AG04450 (cell line): ENCODE measurements at regions of chr9 and their contacts with region 1.

Region 1: GRCh38 chr9:34603610-34604231 is 8.2 kb downstream of the RPP25L start:
- DNase-seq: peak; percentile 29
- H3K4me3 ChIP-seq: no peak overlapping the region
- H3K27ac ChIP-seq: no peak overlapping the region
- H3K27me3 ChIP-seq: peaks cover 31% of the 10 kb centered on the region
- CTCF ChIP-seq: peak; percentile 95

Region 2: DNA sequence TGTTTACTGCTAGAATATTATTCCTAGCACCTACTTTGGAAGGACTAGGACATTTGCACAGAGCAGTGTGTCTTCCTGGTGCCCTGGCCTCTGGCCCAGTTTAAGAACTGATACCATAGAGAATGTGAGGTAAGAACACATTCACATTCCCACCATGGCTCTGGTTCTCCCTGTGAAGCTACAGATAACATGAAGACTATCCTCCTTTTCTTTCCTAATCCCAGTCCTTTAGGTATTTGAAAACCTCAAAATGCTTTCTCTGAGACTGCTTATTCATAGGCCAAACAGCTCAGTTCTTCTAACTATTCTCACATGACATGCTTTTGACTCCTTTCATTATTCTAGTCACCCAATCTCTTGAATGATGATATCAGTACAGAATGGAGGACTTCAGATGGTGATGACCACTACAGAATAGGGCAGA is 157.2 kb before region 1 on chr9:
- CTCF ChIA-PET with region 1: interaction called, 11 read pairs
- POLR2A ChIA-PET with region 1: no interaction called
- DNase-seq: no peak
- H3K4me3 ChIP-seq: no peak overlapping the region
- H3K27ac ChIP-seq: no peak overlapping the region
- H3K27me3 ChIP-seq: no peaks in the 10 kb centered on the region
- CTCF ChIP-seq: no peak

Region 3: DNA sequence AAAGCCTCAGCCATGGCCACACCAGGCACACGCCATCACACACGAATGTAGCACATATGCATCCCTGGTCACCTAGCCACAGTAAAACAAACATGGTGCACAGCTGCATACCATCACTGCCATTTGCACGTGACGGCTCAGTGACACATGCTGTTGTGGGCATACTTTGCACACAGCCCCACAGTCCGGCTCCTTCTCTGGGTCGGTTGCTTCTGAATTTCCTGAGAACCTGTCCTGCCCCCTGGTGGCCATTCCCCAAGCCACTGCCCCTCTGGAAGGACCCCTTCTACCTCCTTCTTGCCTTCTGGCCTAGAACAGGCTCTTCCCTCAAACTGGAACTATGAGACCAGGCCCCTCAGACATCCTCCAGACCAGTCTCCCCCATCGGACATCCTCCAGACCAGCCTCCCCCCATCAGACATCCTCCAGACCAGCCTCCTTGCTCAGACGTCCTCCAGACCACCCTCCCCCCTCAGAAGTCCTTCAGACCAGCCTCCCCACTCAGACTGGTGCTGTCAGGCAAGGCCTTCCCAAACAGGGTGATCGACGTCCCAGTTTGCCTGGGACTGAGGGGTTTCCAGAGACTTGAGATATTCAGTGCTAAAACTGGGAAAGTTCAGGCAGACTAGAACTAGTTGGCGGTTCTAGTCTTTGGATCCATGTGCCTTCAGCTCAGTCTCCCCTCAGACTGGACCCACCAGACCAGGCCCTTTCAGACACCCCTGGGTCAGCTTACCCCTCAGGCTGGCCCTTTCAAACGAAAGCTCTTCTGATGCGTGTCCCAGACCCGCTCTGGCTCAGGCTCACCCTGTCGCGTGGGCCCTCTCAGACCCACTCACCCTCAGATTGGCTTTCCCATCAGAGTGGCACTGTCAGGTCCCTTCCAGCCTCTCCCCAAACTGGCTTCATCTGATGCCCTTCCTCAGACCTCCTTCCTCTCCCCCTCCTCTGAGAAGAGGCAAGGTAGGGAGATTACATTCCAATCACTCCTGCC is 56.6 kb before region 1 on chr9:
- CTCF ChIA-PET with region 1: interaction called, 31 read pairs
- POLR2A ChIA-PET with region 1: no interaction called
- DNase-seq: peak; percentile 10
- H3K4me3 ChIP-seq: no peak overlapping the region
- H3K27ac ChIP-seq: no peak overlapping the region
- H3K27me3 ChIP-seq: peaks cover 10% of the 10 kb centered on the region
- CTCF ChIP-seq: peak; percentile 63

Region 4: GRCh38 chr9:34591248-34591916 is 12.3 kb before region 1 on chr9:
- CTCF ChIA-PET with region 1: interaction called, 39 read pairs
- POLR2A ChIA-PET with region 1: no interaction called
- DNase-seq: peak; percentile 32
- H3K4me3 ChIP-seq: no peak overlapping the region
- H3K27ac ChIP-seq: no peak overlapping the region
- H3K27me3 ChIP-seq: peaks cover 74% of the 10 kb centered on the region
- CTCF ChIP-seq: peak; percentile 85

Region 5: GRCh38 chr9:34637356-34638137 is 33.8 kb after region 1 on chr9 and contains the start of gene SIGMAR1:
- CTCF ChIA-PET with region 1: interaction called, 36 read pairs
- POLR2A ChIA-PET with region 1: no interaction called
- DNase-seq: peak; percentile 82
- H3K4me3 ChIP-seq: peak within 1 kb of the TSS; percentile 80
- H3K27ac ChIP-seq: peak within 1 kb of the TSS; percentile 11
- H3K27me3 ChIP-seq: no peaks in the 10 kb centered on the region
- CTCF ChIP-seq: no peak
- polyA plus RNA-seq, gene SIGMAR1: 38.9 and 56.9 TPM in 2 replicates

Region 6: DNA sequence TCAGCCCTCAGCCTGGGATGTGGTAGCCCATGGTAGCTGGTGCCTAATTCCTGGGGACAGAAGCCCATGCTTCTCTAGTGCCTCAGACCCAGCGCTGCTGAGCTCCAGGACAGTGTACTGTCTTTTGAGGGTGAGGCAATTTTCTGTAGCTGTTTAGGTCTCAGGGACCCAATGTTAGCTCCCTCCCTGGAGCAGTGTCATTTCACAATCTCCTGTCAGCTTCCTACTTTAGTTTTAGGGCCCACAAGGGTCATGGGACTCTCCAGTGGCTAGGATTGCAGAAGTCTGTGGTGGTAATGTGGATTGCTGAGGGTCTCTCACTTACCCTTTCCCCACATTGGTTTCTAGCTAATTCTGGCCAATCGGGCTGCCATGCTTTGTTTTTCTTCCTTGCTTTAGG is 173.9 kb after region 1 on chr9:
- CTCF ChIA-PET with region 1: no interaction called
- POLR2A ChIA-PET with region 1: no interaction called
- DNase-seq: no peak
- H3K4me3 ChIP-seq: no peak overlapping the region
- H3K27ac ChIP-seq: no peak overlapping the region
- H3K27me3 ChIP-seq: peaks cover 3% of the 10 kb centered on the region
- CTCF ChIP-seq: no peak

Region 7: GRCh38 chr9:34899535-34900158 is 295.9 kb after region 1 on chr9:
- CTCF ChIA-PET with region 1: no interaction called
- POLR2A ChIA-PET with region 1: no interaction called
- DNase-seq: peak; percentile 33
- H3K4me3 ChIP-seq: no peak overlapping the region
- H3K27ac ChIP-seq: no peak overlapping the region
- H3K27me3 ChIP-seq: peaks cover 17% of the 10 kb centered on the region
- CTCF ChIP-seq: peak; percentile 91